Prostate gland (tissue), 2 donors: ENCODE measurements at regions of chr21 and their contacts with region 1.

Region 1: GRCh38 chr21:34073032-34073869 is at the starts of genes MRPS6 and SLC5A3:
- DNase-seq: peak; percentile 79
- H3K4me3 ChIP-seq: peak within 1 kb of the TSS; percentile 77 to 80
- H3K27ac ChIP-seq: peak within 1 kb of the TSS; percentile 85 to 89
- H3K4me1 ChIP-seq: peaks cover 10% of the 10 kb centered on the region
- H3K27me3 ChIP-seq: no peaks in the 10 kb centered on the region
- CTCF ChIP-seq: peak in 1 of 4 experiments; percentile 5
- POLR2A ChIP-seq: peak; percentile 88
- total RNA-seq, gene MRPS6: 24.9 to 75.8 TPM
- total RNA-seq, gene SLC5A3: 8.2 to 44.0 TPM

Region 2: GRCh38 chr21:33598051-33598450 is 475.2 kb before region 1 on chr21:
- intact Hi-C with region 1: no loop called
- DNase-seq: no peak
- H3K4me3 ChIP-seq: no peak overlapping the region
- H3K27ac ChIP-seq: no peak overlapping the region
- H3K4me1 ChIP-seq: no peaks in the 10 kb centered on the region
- H3K27me3 ChIP-seq: no peaks in the 10 kb centered on the region
- CTCF ChIP-seq: no peak
- POLR2A ChIP-seq: no peak

Region 3: DNA sequence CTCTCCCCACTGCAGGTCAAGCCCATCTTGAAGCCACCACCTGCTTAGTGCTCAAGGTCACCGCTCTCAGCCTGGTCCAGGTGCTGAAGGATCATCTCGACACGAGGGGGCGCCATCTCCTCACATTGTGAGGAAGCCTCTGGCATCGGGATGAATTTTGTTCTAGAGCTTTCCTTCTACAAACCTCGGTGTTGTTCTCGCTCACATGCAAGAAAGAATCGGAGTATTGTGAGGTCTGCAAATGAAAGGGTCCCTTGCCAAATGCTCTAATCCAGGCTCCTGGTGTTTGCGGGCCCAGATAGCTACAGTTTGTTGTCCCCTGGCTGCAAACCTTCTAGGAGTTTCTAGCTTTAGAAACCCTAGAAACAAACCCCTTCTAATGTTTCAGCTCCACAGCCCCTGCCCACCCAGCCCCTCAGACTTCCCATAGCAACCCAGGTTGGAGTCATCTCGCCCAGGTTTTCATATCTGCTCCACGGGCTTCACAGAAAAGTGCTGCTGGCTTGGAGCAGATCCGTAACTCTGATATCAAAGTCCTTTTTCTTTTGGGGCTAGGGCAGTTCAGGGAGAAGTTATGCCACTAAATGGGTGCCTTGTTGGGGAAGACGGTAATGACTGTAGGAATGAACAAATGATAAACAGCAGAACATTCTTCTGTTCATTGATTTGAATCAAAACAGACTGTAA is 149.0 kb before region 1 on chr21:
- intact Hi-C with region 1: loop called (anchors 5 kb)
- DNase-seq: peak; percentile 85
- H3K4me3 ChIP-seq: no peak overlapping the region
- H3K27ac ChIP-seq: no peak overlapping the region
- H3K4me1 ChIP-seq: no peaks in the 10 kb centered on the region
- H3K27me3 ChIP-seq: no peaks in the 10 kb centered on the region
- CTCF ChIP-seq: peak; percentile 80 to 93 (median 92)
- POLR2A ChIP-seq: no peak

Region 4: DNA sequence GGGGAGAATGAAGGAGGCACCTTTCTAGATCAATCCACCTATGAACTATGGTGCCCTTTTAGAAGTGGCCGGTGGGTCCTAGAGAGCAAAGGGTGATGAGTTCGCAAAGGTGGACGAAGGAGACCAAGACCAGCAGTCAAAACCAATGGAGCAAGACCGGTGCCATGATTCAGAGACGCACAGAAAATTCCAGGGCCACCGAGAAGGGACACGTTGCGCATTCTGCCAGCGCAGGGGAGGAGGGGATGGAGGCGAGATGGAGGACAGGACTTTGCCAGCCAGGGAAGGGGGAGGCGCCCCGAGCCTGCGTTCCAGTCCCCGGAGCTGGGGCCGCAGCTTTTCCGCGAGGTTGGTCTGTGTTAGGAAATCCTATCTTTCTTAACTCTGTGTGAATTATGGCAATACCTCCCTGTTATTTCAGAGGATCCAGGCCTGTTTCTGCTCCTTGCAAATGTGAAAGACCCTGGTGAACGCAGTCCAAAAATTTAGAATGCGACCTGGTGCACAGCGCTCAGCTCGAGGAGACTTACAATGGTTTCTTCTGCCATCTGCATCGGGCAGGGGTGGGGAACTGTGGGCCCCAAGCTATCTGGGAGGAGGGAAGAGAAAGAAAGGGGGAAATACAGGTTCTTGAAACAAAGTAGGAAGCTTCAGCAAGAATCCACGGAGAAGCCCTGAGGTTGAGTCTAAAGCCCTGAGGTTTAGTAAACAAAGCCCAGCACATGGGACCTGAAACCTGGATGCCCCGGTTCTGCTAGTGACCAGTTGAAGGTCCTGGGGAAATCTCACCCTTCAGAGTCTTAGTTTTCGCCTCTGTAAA is 129.5 kb after region 1 on chr21:
- intact Hi-C with region 1: loop called (anchors 2 kb)
- DNase-seq: no peak
- H3K4me3 ChIP-seq: peak overlapping the region in 1 of 2 donors; percentile 49
- H3K27ac ChIP-seq: peak overlapping the region; percentile 61 to 70
- H3K4me1 ChIP-seq: no peaks in the 10 kb centered on the region
- H3K27me3 ChIP-seq: no peaks in the 10 kb centered on the region
- CTCF ChIP-seq: no peak
- POLR2A ChIP-seq: no peak

Region 5: DNA sequence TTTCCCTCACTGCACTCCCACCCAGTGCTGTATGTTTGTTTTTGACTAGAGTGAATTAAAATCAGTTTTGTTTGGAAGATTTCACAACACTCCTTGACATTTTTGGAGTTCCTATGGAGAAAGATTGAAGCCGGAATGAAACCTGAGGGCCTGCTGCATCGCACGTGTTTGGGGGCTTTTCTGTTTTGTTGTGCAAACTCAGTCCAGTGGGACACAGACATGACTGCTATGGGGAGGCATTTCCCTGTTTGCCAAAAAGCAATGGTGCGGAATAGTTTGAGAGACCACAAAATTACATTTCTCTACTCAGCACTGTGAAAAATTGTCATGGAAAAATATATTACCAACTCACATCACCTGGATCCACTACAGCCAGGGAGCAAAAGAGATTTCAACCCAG is 246.8 kb after region 1 on chr21:
- intact Hi-C with region 1: no loop called
- DNase-seq: no peak
- H3K4me3 ChIP-seq: no peak overlapping the region
- H3K27ac ChIP-seq: no peak overlapping the region
- H3K4me1 ChIP-seq: no peaks in the 10 kb centered on the region
- H3K27me3 ChIP-seq: no peaks in the 10 kb centered on the region
- CTCF ChIP-seq: no peak
- POLR2A ChIP-seq: no peak

Region 6: DNA sequence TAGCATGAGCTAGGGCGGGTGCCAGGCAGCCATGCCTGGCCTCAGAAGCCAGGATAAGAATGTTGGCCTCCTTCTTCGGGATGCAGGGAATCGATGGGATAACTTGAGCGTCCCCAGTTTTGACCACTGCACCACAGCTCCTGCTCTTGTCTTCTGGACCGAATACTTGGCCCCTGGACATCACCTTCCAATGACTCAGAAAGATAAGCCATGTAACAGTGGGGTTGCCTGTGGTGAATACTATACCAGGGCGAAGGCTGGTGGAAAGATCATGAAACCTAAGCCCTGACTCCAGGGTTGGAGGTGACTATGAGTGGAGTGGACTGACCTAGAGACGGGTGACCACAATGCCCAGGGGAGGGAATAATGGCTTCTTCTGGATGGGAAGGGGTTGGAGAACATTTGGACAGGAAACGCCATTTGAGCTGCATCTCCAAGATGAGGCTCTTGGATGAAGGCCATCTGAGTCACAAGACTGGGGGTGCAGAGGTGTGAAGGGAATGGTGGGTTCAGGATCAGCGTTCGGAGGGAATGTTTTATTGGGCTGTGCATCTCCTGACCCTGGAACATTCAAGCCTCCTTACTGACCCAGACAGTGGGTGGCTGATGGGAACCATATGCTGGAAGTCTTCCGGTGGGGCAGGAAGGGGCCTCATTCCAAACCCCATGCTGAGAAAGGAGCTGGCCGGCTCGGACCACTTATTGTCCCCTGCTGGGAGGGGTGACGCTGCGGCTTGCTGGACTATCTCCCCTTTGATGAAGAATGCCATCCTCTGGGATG is 272.0 kb after region 1 on chr21:
- intact Hi-C with region 1: loop called (anchors 1 kb)
- DNase-seq: no peak
- H3K4me3 ChIP-seq: no peak overlapping the region
- H3K27ac ChIP-seq: peak overlapping the region; percentile 56 to 69
- H3K4me1 ChIP-seq: no peaks in the 10 kb centered on the region
- H3K27me3 ChIP-seq: no peaks in the 10 kb centered on the region
- CTCF ChIP-seq: no peak
- POLR2A ChIP-seq: no peak

Region 7: GRCh38 chr21:35256467-35256988 is 1183.3 kb after region 1 on chr21:
- intact Hi-C with region 1: no loop called
- DNase-seq: peak; percentile 87
- H3K4me3 ChIP-seq: peak overlapping the region in 1 of 2 donors; percentile 4
- H3K27ac ChIP-seq: peak overlapping the region; percentile 80 to 85
- H3K4me1 ChIP-seq: no peaks in the 10 kb centered on the region
- H3K27me3 ChIP-seq: no peaks in the 10 kb centered on the region
- CTCF ChIP-seq: peak in 2 of 4 experiments; percentile 18 to 29
- POLR2A ChIP-seq: no peak